PC-9 (cell line): ENCODE measurements at regions of chr10 and their contacts with region 1.

Region 1: DNA sequence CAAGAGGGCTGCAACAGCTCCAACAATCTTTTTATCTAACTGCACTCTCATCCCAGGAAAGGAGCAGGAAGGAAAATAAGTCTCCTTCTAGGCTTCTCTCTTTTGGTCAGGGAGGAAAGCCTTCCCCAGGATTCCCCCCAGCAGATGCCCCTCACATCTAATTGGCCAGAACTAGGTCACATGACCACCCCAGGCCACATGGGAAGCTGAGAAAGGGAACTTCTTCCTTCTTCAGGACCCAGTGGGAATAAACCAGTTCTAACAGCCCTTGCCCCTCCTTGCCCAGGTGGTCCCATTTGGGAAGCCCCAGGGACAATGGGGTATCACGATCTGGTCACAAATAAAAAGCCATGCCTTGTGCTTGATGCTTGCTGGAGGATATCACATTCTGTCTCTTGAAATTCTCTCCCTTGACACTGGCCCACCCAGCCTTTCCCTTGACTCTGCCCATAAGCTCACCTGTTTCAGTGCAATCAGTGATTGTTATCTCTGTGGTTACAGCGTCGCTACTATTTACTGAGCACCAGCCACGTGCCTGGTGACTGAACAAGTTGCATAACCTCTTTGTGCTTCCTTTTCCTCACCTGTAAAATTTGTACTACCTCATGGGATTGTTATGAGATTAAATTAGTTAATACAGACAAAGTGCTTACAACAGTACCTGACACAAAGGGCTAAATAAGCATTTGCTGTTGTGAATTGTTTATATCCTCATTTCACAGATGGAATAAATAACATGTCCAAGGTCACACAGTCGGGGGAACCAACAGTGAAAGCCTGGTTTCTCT is 9.0 kb upstream of the TACR2 start:
- DNase-seq: peak; percentile 69 to 98
- H3K4me3 ChIP-seq: no peak overlapping the region
- H3K27ac ChIP-seq: peak overlapping the region; percentile 44
- H3K4me1 ChIP-seq: peaks cover 28% of the 10 kb centered on the region
- H3K27me3 ChIP-seq: peaks cover 10% of the 10 kb centered on the region; the same call in 1 of the 2 replicates
- CTCF ChIP-seq: no peak

Region 2: DNA sequence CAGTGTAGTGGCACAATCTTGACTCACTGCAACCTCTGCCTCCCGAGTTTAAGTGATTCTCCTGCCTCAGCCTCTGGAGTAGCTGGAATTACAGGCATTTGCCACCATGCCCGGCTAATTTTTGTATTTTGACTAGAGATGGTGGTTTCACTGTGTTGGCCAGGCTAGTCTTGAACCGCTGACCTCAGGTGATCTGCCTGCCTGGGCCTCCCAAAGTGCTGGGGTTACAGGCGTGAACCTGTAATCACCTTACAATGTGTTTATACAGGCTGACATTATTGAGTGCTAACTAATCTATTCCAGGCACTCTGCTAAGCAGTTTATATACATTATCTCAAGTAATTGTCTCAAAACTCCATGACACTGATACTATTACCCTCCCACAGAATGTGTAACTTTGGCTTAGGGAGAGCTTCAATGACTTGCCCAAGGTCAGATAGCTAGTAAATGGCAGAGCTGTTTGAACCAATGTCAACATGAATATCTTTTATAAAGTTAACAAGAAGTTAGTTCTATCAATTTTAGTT is 400.3 kb before region 1 on chr10:
- CTCF ChIA-PET with region 1: interaction called, 10 read pairs
- POLR2A ChIA-PET with region 1: no interaction called
- intact Hi-C with region 1: no loop called
- DNase-seq: no peak
- H3K4me3 ChIP-seq: no peak overlapping the region
- H3K27ac ChIP-seq: no peak overlapping the region
- H3K4me1 ChIP-seq: no peaks in the 10 kb centered on the region
- H3K27me3 ChIP-seq: no peaks in the 10 kb centered on the region
- CTCF ChIP-seq: no peak

Region 3: DNA sequence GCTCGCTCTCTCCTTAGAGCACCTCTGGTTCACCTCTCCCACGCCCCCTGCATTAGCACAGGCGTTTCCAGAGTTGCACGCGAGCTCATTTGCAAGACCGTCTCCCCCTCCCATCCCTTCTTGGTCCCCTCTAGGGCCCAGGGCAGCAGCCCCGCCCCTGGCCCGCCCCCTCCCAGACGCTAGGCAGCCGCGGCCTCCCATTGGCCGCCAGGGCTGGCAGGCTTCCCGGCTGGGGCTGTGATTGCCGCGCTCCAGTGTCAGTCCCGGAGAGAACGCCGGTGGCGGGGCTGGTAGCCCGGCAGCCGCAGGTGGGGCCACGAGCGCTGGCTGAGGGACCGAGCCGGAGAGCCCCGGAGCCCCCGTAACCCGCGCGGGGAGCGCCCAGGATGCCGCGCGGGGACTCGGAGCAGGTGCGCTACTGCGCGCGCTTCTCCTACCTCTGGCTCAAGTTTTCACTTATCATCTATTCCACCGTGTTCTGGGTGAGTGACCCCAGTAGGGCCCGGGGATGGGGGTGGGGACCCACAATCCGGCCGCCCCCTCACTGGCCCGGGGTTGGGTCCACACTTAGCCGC is 25.6 kb after region 1 on chr10 and contains the start of gene TSPAN15:
- CTCF ChIA-PET with region 1: interaction called, 7 read pairs
- POLR2A ChIA-PET with region 1: interaction called, 17 read pairs
- intact Hi-C with region 1: loop called (anchors 2 kb)
- DNase-seq: peak; percentile 88 to 97
- H3K4me3 ChIP-seq: peak within 1 kb of the TSS; percentile 81
- H3K27ac ChIP-seq: peak within 1 kb of the TSS; percentile 95
- H3K4me1 ChIP-seq: peaks cover 87% of the 10 kb centered on the region
- H3K27me3 ChIP-seq: no peaks in the 10 kb centered on the region
- CTCF ChIP-seq: no peak
- total RNA-seq, gene TSPAN15: 97.0 and 108 TPM in 2 replicates

Region 4: DNA sequence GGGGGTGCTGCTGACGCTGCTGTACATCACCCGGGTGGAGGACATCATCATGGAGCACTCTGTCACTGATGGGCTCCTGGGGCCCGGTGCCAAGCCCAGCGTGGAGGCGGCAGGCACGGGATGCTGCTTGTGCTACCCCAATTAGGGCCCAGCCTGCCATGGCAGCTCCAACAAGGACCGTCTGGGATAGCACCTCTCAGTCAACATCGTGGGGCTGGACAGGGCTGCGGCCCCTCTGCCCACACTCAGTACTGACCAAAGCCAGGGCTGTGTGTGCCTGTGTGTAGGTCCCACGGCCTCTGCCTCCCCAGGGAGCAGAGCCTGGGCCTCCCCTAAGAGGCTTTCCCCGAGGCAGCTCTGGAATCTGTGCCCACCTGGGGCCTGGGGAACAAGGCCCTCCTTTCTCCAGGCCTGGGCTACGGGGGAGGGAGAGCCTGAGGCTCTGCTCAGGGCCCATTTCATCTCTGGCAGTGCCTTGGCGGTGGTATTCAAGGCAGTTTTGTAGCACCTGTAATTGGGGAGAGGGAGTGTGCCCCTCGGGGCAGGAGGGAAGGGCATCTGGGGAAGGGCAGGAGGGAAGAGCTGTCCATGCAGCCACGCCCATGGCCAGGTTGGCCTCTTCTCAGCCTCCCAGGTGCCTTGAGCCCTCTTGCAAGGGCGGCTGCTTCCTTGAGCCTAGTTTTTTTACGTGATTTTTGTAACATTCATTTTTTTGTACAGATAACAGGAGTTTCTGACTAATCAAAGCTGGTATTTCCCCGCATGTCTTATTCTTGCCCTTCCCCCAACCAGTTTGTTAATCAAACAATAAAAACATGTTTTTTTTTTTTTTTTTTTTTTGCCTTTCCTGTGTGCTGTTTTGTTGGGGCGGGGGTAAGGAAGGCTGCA is 81.4 kb after region 1 on chr10:
- CTCF ChIA-PET with region 1: interaction called, 7 read pairs
- POLR2A ChIA-PET with region 1: interaction called, 3 read pairs
- intact Hi-C with region 1: loop called (anchors 1 kb)
- DNase-seq: peak; percentile 38 to 68
- H3K4me3 ChIP-seq: no peak overlapping the region
- H3K27ac ChIP-seq: peak overlapping the region; percentile 52
- H3K4me1 ChIP-seq: peaks cover 11% of the 10 kb centered on the region
- H3K27me3 ChIP-seq: no peaks in the 10 kb centered on the region
- CTCF ChIP-seq: no peak

Region 5: GRCh38 chr10:69639291-69640195 is 213.8 kb after region 1 on chr10:
- CTCF ChIA-PET with region 1: interaction called, 4 read pairs
- POLR2A ChIA-PET with region 1: no interaction called
- intact Hi-C with region 1: loop called (anchors 1 kb)
- DNase-seq: peak; percentile 46 to 62
- H3K4me3 ChIP-seq: no peak overlapping the region
- H3K27ac ChIP-seq: no peak overlapping the region
- H3K4me1 ChIP-seq: peaks cover 10% of the 10 kb centered on the region
- H3K27me3 ChIP-seq: peaks cover 14% of the 10 kb centered on the region; the same call in 1 of the 2 replicates
- CTCF ChIP-seq: peak; percentile 98

Region 6: GRCh38 chr10:70940834-70941568 is 1515.3 kb after region 1 on chr10:
- CTCF ChIA-PET with region 1: no interaction called
- POLR2A ChIA-PET with region 1: no interaction called
- intact Hi-C with region 1: no loop called
- DNase-seq: peak in 1 of 2 experiments; percentile 35
- H3K4me3 ChIP-seq: no peak overlapping the region
- H3K27ac ChIP-seq: no peak overlapping the region
- H3K4me1 ChIP-seq: no peaks in the 10 kb centered on the region
- H3K27me3 ChIP-seq: peaks cover 61% of the 10 kb centered on the region
- CTCF ChIP-seq: no peak